ENCODE measurements at regions of chr1 and their contacts with region 1.

Region 1: DNA sequence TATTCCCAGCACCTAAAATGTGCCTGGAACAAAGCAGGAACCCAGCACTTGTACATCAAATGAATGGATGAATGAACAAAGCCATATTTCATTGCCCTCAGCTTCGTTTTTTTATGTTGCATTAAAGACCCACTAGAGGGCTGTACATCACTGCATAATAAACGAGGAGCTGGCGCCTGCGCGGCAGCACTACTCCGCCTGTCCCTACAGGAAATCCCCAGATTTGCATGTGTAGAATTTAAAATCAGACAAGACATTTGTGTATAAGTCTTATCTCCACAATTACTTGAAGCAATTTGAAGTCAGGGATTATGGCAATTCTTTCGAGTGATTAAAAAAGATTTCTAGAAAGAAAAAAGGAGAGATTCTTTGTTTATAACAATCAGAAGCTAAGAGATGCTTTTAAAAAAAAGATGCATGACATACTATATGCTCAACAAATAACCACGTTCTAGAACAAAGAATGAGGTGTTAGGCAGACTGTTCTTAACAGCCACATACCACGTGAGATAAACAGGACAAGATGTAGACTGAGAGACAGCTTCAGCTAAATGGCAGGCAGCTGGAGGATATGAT is 5.4 kb upstream of the NEK2 start:
- DNase-seq: peak; percentile 86
- H3K4me3 ChIP-seq: no peak overlapping the region
- H3K27ac ChIP-seq: no peak overlapping the region
- H3K4me1 ChIP-seq: peaks cover 3% of the 10 kb centered on the region
- H3K27me3 ChIP-seq: peaks cover 0 to 2% of the 10 kb centered on the region in 2 experiments
- CTCF ChIP-seq: peak; percentile 59 to 66
- POLR2A ChIP-seq: no peak

Region 2: GRCh38 chr1:211654838-211655787 is 25.7 kb before region 1 on chr1:
- CTCF ChIA-PET with region 1: no interaction called
- POLR2A ChIA-PET with region 1: no interaction called
- dilution Hi-C with region 1: no loop called
- intact Hi-C with region 1: no loop called
- DNase-seq: peak; percentile 87
- H3K4me3 ChIP-seq: no peak overlapping the region
- H3K27ac ChIP-seq: peak overlapping the region; percentile 80
- H3K4me1 ChIP-seq: peaks cover 20% of the 10 kb centered on the region
- H3K27me3 ChIP-seq: no peaks in the 10 kb centered on the region
- CTCF ChIP-seq: peak; percentile 89 to 96
- POLR2A ChIP-seq: no peak

Region 3: DNA sequence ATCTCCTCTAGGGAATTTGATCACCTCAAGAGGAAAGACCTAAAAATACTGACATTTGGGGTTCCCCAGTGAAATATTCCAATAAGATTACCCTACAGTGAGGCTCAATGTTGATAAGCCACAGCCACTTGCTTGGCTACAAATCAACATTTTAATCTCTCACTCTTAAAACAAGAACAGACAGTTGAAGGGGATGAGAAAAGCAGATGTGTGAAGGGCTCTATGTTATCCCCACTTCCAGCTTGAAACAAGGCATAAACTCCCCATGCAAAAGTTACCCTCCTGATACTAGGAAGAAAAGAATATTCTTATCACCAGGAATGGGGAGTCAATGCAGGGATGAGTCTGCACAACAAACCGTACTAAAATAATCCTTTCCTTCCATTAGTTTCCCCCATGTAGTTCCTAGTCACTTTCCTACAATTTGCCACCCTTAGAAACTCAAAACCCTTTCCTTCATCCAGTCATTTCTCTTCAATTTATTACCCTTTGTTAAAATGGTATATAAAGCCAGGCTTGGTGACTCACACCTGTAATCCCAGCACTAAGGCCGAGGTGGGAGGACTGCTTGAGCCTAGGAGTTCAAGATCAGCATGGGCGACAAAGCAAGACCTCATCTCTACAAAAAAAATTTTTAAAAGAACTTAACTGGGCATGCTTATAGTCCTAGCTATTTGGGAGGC is 120.2 kb after region 1 on chr1:
- CTCF ChIA-PET with region 1: no interaction called
- POLR2A ChIA-PET with region 1: no interaction called
- dilution Hi-C with region 1: no loop called
- intact Hi-C with region 1: no loop called
- DNase-seq: no peak
- H3K4me3 ChIP-seq: no peak overlapping the region
- H3K27ac ChIP-seq: no peak overlapping the region
- H3K4me1 ChIP-seq: no peaks in the 10 kb centered on the region
- H3K27me3 ChIP-seq: no peaks in the 10 kb centered on the region
- CTCF ChIP-seq: no peak
- POLR2A ChIP-seq: no peak

Region 4: GRCh38 chr1:211830330-211831142 is 149.7 kb after region 1 on chr1 and contains the start of gene LPGAT1:
- CTCF ChIA-PET with region 1: interaction called, 6 read pairs
- POLR2A ChIA-PET with region 1: no interaction called
- dilution Hi-C with region 1: no loop called
- intact Hi-C with region 1: loop called (anchors 1 kb)
- DNase-seq: peak; percentile 58
- H3K4me3 ChIP-seq: peak within 1 kb of the TSS; percentile 74 to 92 (median 82)
- H3K27ac ChIP-seq: peak within 1 kb of the TSS; percentile 55
- H3K4me1 ChIP-seq: peaks cover 7% of the 10 kb centered on the region
- H3K27me3 ChIP-seq: no peaks in the 10 kb centered on the region
- CTCF ChIP-seq: peak; percentile 53 to 63
- POLR2A ChIP-seq: peak; percentile 36
- total RNA-seq, gene LPGAT1: 46.0 and 49.5 TPM in 2 replicates

Region 5: GRCh38 chr1:212012034-212012740 is 331.3 kb after region 1 on chr1:
- CTCF ChIA-PET with region 1: interaction called, 14 read pairs
- POLR2A ChIA-PET with region 1: no interaction called
- dilution Hi-C with region 1: no loop called
- intact Hi-C with region 1: loop called (anchors 1 kb)
- DNase-seq: peak; percentile 70
- H3K4me3 ChIP-seq: no peak overlapping the region
- H3K27ac ChIP-seq: no peak overlapping the region
- H3K4me1 ChIP-seq: peaks cover 4% of the 10 kb centered on the region
- H3K27me3 ChIP-seq: no peaks in the 10 kb centered on the region
- CTCF ChIP-seq: peak; percentile 90 to 92
- POLR2A ChIP-seq: no peak

Region 6: DNA sequence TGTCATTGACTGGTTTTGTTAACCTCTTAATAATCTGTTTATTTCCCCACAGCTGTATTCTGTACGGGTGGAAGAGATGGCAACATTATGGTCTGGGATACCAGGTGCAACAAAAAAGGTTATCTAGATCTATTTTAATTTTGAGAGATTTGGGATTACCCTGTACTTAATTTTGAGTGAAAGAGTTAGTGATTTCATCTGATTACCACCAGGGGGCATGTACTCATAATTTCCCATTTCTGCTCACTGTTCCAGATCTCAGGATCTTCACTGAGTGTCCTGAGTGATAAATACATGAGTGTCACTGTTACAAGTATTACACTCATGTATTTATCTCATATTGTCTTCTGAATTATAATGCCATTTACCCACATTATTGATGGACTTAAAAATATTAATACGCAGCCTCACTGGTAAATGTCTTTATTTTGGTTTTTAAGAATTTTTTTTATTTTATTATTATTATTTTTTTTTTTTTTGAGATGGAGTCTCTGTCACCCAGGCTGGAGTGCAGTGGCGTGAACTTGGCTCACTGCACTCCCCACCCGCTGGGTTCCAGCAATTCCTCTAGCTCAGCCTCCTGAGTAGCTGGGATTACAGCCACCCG is 382.1 kb after region 1 on chr1:
- CTCF ChIA-PET with region 1: interaction called, 25 read pairs
- POLR2A ChIA-PET with region 1: no interaction called
- dilution Hi-C with region 1: no loop called
- intact Hi-C with region 1: loop called (anchors 2 kb)
- DNase-seq: peak; percentile 57
- H3K4me3 ChIP-seq: no peak overlapping the region
- H3K27ac ChIP-seq: no peak overlapping the region
- H3K4me1 ChIP-seq: peaks cover 13% of the 10 kb centered on the region
- H3K27me3 ChIP-seq: no peaks in the 10 kb centered on the region
- CTCF ChIP-seq: peak; percentile 42 to 45
- POLR2A ChIP-seq: no peak

Region 7: DNA sequence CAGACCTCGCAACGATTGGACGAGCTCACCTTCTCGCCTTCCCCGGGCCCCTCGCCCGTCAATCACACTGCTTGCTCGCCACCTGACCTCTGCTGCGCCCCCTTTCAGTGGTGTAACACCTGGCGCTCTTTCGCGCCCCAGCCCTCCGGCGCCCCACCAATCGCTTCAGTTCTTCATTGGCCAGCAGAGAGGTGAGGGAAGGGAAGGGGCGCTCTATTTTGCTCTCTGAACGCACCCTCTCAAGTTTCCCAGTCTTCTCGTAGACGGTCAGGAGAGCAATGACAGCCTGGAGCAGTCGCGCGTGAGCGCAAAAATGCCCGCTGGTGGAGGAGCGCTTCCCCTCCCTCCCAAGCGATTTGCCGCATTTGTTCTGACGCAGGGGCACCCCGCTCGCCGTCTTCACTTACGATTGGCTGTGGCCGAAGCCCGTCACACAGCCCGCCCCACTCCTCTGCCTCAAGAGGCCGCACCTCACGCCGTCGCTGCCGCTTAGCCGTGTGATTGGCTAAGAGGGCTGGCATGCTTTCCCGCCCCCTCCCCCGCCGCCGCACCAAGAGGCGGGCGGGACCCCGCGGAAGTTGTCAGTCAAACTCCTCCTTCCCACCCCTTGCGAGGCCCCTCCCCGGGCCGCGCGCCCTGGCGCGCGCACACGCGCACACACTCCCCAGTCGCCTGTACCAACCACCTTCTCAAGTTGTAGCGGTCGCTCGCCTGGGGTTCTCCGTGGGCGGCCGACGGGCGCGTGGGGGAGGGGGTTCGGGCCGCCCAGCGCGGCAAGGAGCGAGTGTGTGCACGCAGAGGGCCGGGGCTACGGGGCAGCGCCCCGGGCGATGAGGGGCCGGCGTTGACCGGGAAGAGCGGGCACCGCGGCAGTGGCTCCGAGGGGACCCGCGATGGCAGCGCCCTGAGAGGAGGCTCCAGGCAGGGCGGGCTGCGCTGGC is 604.2 kb after region 1 on chr1 and contains the start of gene PPP2R5A:
- CTCF ChIA-PET with region 1: interaction called, 7 read pairs
- POLR2A ChIA-PET with region 1: no interaction called
- dilution Hi-C with region 1: no loop called
- intact Hi-C with region 1: loop called (anchors 2 kb)
- DNase-seq: peak; percentile 100
- H3K4me3 ChIP-seq: peak within 1 kb of the TSS; percentile 63 to 86 (median 85)
- H3K27ac ChIP-seq: peak within 1 kb of the TSS; percentile 44
- H3K4me1 ChIP-seq: peaks cover 19% of the 10 kb centered on the region
- H3K27me3 ChIP-seq: no peaks in the 10 kb centered on the region
- CTCF ChIP-seq: peak in 1 of 2 donors; percentile 15
- POLR2A ChIP-seq: peak; percentile 53
- total RNA-seq, gene PPP2R5A: 27.7 and 34.5 TPM in 2 replicates

Region 8: DNA sequence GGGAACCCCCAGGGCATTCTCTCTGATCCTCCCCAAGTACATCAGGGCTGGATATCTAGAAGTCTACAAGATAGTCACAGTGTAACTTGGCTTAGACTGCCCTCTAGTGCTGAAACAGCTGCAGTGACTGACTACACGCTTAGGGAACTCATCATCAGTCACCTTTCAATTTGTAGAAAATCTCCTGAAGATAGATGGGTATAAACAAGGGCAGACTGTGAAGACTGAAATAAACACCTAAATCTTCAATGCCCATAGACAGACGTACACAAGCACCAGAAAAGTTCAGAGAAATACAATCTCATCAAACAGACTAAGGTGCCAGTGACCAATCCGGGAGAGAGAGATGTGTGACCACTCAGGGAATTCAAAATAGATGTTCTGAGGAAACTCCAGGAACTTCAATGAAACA is 687.2 kb after region 1 on chr1:
- CTCF ChIA-PET with region 1: interaction called, 21 read pairs
- POLR2A ChIA-PET with region 1: no interaction called
- dilution Hi-C with region 1: no loop called
- intact Hi-C with region 1: loop called (anchors 5 kb)
- DNase-seq: peak; percentile 68
- H3K4me3 ChIP-seq: no peak overlapping the region
- H3K27ac ChIP-seq: no peak overlapping the region
- H3K4me1 ChIP-seq: no peaks in the 10 kb centered on the region
- H3K27me3 ChIP-seq: no peaks in the 10 kb centered on the region
- CTCF ChIP-seq: peak; percentile 77 to 78
- POLR2A ChIP-seq: no peak

Region 9: DNA sequence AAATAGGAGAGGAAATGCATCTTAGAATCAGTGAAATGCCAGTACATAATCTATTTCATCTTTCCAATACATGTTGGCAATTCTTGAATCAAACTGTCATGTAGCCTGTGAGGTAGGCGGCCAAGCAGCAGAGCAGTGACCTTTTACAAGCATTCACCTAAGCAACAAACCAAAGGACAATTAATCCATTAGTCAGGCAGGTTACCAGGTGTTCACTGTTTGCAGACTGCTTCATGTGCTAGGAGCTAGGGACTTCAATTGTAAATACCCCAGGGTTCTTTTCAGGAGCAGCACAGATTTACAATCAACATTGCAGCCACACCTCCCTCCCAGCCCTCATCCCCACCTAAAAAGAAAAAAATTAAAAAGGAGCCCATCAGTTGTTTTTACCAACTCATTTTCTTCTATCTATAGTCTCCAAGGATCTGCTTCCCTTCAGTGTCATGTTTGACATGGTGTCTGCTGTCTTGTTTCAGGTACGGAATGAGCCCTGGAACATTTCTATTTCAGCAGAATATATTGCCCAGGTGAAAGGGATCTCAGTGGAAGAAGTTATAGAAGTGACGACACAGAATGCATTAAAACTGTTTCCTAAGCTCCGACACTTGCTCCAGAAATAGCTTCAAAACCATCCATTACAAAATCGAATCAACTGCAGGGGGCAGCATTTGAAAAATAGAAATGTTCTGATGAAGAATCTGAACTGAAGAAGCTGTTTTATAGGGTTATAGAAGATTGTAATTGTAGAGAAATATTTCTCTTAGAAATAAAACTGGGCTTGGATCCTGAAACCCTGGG is 1133.9 kb after region 1 on chr1:
- CTCF ChIA-PET with region 1: no interaction called
- POLR2A ChIA-PET with region 1: no interaction called
- dilution Hi-C with region 1: no loop called
- intact Hi-C with region 1: no loop called
- DNase-seq: peak; percentile 27
- H3K4me3 ChIP-seq: no peak overlapping the region
- H3K27ac ChIP-seq: no peak overlapping the region
- H3K4me1 ChIP-seq: peaks cover 2% of the 10 kb centered on the region
- H3K27me3 ChIP-seq: no peaks in the 10 kb centered on the region
- CTCF ChIP-seq: no peak
- POLR2A ChIP-seq: no peak

Measured in endothelial cell of umbilical vein (primary cell).